ENCODE measurements at regions of chr22 and their contacts with region 1.

Region 1: DNA sequence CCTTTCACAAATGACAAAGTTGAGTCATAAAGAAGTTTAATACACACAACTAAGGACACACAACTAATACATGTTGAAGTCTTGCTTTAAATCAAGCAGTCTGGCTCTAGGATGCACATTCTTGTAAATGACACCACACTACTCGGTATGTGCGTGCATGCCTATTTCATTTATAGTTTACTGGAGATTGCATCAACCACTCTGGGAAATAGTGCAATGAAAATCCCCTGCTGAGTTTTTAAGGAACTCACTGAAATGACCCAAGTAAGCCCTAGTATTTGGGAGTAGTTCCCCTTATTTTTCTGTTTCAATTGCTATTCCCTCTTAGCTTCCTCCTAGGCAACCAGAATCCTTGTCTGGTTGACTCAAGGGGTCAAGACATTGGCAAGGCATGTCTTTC is 160.2 kb upstream of the LARGE1 start:
- DNase-seq: no peak
- H3K4me3 ChIP-seq: no peak overlapping the region
- CTCF ChIP-seq: no peak

Region 2: DNA sequence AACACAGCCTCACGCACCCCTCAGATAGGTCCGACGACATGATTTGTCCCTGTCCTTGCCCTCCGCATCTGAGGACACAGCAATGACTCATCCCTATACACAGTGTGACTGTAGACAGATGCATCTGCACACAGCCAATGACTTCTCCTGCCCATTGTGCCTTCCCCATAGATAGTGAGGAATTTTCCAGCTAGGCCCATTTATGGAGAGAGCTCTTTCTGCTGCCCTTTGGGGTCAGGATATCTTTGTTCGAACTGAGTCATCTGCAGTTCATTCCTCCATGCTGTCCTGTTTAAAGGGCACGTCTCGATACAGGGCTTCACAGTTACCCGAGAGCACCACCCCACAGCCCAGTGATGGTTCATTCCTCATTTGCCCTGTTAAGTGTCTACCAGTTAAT is 256.9 kb before region 1 on chr22:
- in situ Hi-C with region 1: no loop called
- DNase-seq: no peak
- H3K4me3 ChIP-seq: no peak overlapping the region
- CTCF ChIP-seq: no peak

Region 3: DNA sequence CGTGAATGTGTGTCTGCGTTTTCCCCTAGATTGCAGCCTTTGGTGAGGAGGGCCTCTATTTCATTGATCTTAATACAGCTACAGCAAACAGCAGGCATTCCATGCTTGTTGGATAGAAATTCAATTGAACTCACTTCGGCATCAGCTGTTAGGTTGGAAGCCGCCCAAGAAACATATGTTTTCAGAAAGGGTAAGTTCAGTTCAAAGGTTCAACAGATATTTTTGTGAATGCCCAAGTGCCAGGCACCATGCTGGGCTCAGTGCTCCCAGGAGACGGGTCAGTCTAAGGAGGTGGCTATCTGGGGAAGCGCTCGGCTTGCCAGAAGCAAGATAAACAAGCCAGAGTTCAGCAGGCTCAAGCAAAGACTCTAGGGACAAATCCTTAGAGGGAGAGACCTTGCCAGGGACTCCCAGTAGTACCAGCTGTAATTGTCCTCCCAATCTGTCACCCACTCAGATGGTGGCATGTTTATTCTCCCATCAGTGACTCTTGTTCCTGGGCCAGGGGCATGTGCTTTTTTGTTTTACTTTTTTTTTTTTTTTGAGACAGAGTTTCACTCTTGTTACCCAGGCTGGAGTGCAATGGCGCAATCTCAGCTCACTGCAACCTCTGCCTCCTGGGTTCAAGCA is 95.7 kb before region 1 on chr22:
- in situ Hi-C with region 1: no loop called
- DNase-seq: no peak
- H3K4me3 ChIP-seq: no peak overlapping the region
- CTCF ChIP-seq: no peak

Region 4: GRCh38 chr22:34015642-34016041 is 64.8 kb before region 1 on chr22:
- in situ Hi-C with region 1: no loop called
- DNase-seq: no peak
- H3K4me3 ChIP-seq: no peak overlapping the region
- CTCF ChIP-seq: no peak

Region 5: DNA sequence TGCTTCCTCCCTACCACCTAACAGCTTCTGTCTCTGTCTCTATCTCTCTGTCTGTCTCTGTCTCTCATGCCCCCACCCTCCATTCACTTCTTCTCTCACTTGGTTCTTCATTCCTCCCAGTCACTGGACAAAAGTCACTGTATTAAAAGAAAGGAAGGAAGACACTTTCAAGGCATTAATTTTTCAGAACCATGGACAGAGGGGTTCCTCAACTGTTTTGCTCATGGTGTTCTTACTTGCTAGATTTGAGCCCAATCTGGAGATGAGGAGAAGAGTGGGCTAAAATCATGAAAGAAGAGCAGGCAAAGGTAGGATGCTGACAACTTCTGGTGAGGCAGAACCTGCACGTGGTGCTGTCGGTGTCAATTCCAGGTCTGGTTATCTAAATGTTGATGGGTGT is 43.5 kb before region 1 on chr22:
- in situ Hi-C with region 1: loop called (anchors 5 kb)
- DNase-seq: no peak
- H3K4me3 ChIP-seq: no peak overlapping the region
- CTCF ChIP-seq: no peak

Region 6: GRCh38 chr22:34370711-34371110 is 290.3 kb after region 1 on chr22:
- in situ Hi-C with region 1: no loop called
- DNase-seq: no peak
- H3K4me3 ChIP-seq: no peak overlapping the region
- CTCF ChIP-seq: no peak

Measured in astrocyte of the cerebellum (primary cell).